Psoas muscle (tissue), 8 donors: ENCODE measurements at regions of chr6 and their contacts with region 1.

Region 1: DNA sequence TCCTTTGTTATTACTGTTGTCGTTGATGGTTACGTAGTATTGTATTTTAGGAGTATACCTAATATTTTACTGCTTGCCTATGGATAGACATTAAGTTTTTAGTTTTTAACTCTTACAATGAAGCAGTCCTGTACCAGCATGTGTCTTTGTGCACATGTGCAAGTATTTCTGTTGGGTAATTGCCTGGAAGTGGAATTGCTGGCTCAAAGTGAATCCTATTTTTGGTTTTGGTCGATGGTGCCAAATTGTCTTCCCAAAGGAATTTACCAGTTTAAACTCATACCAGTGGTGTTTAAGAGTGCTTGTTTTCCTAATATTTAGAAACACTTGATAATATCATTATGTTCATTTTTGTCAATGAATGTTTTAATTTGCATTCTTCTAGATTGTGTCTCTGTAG is 75.5 kb downstream of the ANKS1A start:
- DNase-seq: no peak
- ATAC-seq: peak in 2 of 4 donors; percentile 63 to 64
- H3K4me3 ChIP-seq: no peak overlapping the region
- H3K27ac ChIP-seq: no peak overlapping the region
- H3K4me1 ChIP-seq: peaks cover 23% of the 10 kb centered on the region
- H3K27me3 ChIP-seq: no peaks in the 10 kb centered on the region
- CTCF ChIP-seq: no peak

Region 2: GRCh38 chr6:34145161-34146020 is 819.2 kb before region 1 on chr6:
- intact Hi-C with region 1: no loop called
- DNase-seq: peak in 1 of 2 donors; percentile 51
- ATAC-seq: peak; percentile 50 to 73 (median 70)
- H3K4me3 ChIP-seq: peak overlapping the region; percentile 61
- H3K27ac ChIP-seq: no peak overlapping the region
- H3K4me1 ChIP-seq: peaks cover 19% of the 10 kb centered on the region
- H3K27me3 ChIP-seq: peaks cover 0 to 41% (median 17%) of the 10 kb centered on the region in 3 donors
- CTCF ChIP-seq: no peak

Region 3: DNA sequence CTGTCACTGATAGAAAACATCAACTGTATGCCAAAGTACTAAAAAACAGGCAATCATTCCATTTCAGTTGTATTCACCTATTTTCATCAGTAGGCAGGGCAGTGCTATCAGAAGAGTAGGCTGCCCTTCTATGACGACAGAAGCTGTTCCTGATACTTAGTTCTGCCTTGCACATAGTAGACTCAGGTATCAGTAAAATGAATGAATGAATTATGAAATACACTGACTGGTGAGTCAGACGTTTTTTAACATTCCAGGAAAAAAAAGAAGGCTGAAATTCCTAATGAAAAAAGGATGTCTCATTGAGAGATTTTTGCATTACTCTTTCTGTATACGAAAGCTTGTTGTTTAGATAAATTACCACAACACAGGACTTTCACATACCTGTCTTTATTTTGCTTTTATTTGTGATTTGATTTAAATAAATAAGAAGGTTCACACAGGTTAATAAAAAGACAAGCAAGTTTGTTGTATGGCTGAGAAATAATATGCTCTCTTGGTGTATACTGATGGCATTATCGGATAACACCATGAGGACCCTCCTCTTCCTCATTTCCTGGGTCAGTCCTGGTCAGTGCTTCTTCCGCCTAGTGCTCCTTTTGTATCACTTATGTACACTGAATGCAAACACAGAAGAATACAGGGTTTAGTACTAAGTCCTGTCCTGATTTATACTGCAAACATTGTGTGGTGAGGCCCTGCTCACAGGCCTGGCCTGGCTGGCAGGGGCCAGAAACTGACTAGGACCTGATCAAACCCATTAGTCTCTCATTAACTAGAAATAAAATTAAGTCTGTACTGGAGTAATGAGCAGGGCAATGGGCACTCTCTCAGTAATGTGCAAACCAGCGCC is 369.0 kb before region 1 on chr6:
- intact Hi-C with region 1: no loop called
- DNase-seq: no peak
- ATAC-seq: no peak
- H3K4me3 ChIP-seq: no peak overlapping the region
- H3K27ac ChIP-seq: peak overlapping the region; percentile 20
- H3K4me1 ChIP-seq: peaks cover 64% of the 10 kb centered on the region
- H3K27me3 ChIP-seq: no peaks in the 10 kb centered on the region
- CTCF ChIP-seq: no peak

Region 4: DNA sequence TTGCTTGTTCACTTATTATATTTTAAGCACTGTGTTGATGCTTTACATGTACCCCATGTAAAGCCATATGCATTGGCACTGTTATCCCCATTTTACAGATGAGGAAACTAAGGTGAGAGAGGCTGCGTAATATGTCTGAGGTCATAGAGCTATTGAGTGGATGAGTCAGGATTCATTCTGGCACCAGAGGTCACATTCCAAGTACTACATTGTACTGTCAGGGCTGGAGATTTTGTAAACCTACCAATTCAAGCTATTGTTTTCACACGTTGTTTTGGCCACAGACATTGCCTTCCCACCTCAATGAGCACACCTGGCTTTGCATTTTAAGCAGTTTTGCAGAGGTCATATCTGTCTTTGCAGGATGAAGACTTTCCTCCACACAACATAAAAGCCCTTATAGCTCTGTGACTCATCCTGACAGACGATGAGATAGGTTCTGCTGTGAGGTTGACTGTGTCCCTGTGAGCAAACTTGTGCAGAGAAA is 42.3 kb before region 1 on chr6:
- intact Hi-C with region 1: loop called in 1 of 2 experiments (anchors 5 kb)
- DNase-seq: no peak
- ATAC-seq: no peak
- H3K4me3 ChIP-seq: no peak overlapping the region
- H3K27ac ChIP-seq: no peak overlapping the region
- H3K4me1 ChIP-seq: peaks cover 8% of the 10 kb centered on the region
- H3K27me3 ChIP-seq: no peaks in the 10 kb centered on the region
- CTCF ChIP-seq: no peak

Region 5: DNA sequence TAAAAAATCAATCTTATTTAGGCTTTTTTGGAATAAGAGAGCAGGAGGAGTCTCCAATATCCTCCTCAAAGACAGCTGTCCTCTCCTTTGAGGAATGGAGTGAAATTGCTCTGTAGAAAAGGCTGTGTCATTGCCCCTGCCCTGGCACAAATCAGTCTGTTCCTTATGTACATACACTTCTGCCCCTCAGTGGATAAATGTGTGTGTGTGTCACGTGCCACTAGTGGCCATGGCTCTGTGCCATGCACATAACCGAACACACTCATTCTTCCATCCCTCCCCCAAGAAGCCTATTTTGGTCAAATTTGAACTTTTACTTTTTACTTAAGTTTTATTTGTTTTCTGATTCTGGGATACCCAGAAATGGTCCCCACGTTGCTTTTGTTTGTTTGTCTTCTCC is 26.3 kb before region 1 on chr6:
- intact Hi-C with region 1: loop called in 1 of 2 experiments (anchors 2 kb)
- DNase-seq: peak in 1 of 2 donors; percentile 15
- ATAC-seq: no peak
- H3K4me3 ChIP-seq: no peak overlapping the region
- H3K27ac ChIP-seq: no peak overlapping the region
- H3K4me1 ChIP-seq: peaks cover 21% of the 10 kb centered on the region
- H3K27me3 ChIP-seq: no peaks in the 10 kb centered on the region
- CTCF ChIP-seq: no peak

Region 6: DNA sequence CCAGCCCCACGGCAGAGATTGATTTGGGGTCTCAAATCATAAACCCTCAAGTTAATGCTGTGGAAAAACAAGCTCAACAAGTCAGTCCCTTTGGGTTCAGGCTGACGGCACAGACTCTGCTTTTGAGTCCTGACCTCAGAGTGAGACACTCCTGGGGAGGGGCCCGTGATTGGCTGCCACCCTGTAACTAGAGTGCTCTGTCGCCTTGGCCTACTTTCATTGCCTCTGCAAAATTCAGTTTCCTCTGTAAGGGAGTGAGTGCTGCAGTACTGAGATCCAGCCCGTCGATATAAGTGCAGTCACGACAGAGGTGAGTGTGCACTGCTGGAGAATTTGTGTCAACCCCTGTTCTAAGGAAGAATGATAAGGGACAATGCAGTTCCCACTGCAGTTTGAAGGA is 30.1 kb after region 1 on chr6:
- intact Hi-C with region 1: no loop called
- DNase-seq: no peak
- ATAC-seq: peak in 3 of 4 donors; percentile 47 to 56 (median 53)
- H3K4me3 ChIP-seq: no peak overlapping the region
- H3K27ac ChIP-seq: no peak overlapping the region
- H3K4me1 ChIP-seq: no peaks in the 10 kb centered on the region
- H3K27me3 ChIP-seq: no peaks in the 10 kb centered on the region
- CTCF ChIP-seq: no peak

Region 7: GRCh38 chr6:35034411-35035191 is 70.0 kb after region 1 on chr6:
- intact Hi-C with region 1: no loop called
- DNase-seq: peak; percentile 53 to 70
- ATAC-seq: peak; percentile 62 to 90 (median 75)
- H3K4me3 ChIP-seq: peak overlapping the region; percentile 24
- H3K27ac ChIP-seq: peak overlapping the region; percentile 68
- H3K4me1 ChIP-seq: peaks cover 28% of the 10 kb centered on the region
- H3K27me3 ChIP-seq: no peaks in the 10 kb centered on the region
- CTCF ChIP-seq: no peak